Common myeloid progenitor, CD34-positive (primary cell): ENCODE measurements at regions of chr20 and their contacts with region 1.

Region 1: GRCh38 chr20:5835321-5835821 is 85.2 kb downstream of the SHLD1 start:
- DNase-seq: peak; percentile 30 to 73 (median 69)
- H3K4me3 ChIP-seq: peak overlapping the region in 1 of 7 experiments; percentile 27
- H3K27ac ChIP-seq: peak overlapping the region; percentile 59 to 89
- H3K4me1 ChIP-seq: peaks cover 4 to 18% (median 7%) of the 10 kb centered on the region in 4 experiments
- H3K27me3 ChIP-seq: no peaks in the 10 kb centered on the region

Region 2: DNA sequence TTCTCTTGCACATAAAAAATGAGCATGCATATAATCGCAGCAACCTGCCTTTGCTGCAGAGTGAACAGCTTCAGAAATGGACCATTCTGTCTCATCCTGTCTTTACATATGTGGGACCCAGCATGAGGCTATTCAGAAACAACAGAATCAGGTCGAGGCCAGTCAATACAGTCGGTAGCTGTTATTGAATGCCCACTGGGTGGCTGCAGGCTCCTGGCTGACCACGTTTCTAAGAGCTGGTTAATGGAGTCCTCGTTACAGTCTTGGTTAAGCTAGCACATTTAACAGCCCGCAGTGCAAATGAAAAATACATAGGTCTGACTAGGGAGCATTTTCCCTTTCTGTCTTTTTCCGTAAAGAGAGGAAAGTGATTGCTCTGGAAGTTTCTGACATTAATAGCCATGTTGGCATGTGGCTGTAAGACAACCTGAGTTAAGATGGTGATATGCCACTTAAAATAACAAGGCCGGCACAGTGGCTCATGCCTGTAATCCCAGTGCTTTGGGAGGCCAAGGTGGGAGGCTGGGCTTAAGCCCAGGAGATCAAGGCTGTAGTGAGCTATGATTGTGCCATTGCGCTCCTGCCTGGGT is 10.1 kb before region 1 on chr20:
- CTCF ChIA-PET with region 1: interaction called, 11 read pairs
- POLR2A ChIA-PET with region 1: no interaction called
- DNase-seq: no peak
- H3K4me3 ChIP-seq: no peak overlapping the region
- H3K27ac ChIP-seq: no peak overlapping the region
- H3K4me1 ChIP-seq: peaks cover 0 to 7% (median 4%) of the 10 kb centered on the region in 4 experiments
- H3K27me3 ChIP-seq: no peaks in the 10 kb centered on the region

Region 3: GRCh38 chr20:5845681-5846615 is 10.6 kb after region 1 on chr20:
- CTCF ChIA-PET with region 1: no interaction called
- POLR2A ChIA-PET with region 1: no interaction called
- DNase-seq: peak in 1 of 3 donors; percentile 29
- H3K4me3 ChIP-seq: no peak overlapping the region
- H3K27ac ChIP-seq: no peak overlapping the region
- H3K4me1 ChIP-seq: peaks cover 0 to 14% (median 7%) of the 10 kb centered on the region in 4 experiments
- H3K27me3 ChIP-seq: no peaks in the 10 kb centered on the region